AG04449 (cell line): ENCODE measurements at regions of chr1 and their contacts with region 1.

Region 1: DNA sequence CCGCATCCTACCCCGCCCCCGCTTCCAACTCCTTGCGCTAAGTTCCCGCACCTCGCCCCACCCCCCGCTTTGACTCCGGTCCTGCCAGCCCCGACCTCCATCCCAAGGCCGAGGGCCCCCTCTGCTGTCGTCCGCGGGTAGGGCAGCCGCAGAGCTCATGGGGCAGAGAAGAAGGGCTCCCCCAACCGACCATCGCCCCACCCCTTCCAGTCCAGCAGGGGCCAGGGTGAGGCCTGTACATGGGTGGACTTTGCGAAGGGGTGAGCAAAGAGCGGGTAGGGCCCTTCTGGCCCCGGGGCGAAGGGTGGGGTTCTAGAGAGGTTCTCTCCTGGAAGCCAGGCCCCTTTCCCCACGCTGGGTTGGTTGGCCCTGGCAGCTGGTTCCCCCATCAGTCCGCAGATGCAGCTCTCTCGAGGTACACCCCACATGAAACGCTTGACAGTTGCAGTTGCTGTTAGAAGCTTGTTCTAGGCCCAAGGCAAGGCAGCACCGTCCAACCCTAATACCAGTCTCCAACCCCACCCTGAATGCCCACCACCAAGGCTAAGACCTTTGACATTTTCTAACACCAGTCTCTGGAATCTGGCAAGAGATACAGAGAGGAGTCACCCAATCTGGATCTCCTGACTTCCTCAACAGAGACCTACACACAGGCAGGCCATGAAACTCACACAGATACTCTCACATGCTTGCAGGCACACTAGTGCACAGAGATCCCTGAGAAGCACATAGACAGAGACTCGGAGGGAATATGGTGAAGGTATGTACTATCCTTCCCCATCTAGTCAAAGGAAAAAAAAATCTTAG is 25.3 kb upstream of the ADGRB2 start:
- DNase-seq: peak; percentile 49
- H3K4me3 ChIP-seq: peak overlapping the region; percentile 76
- CTCF ChIP-seq: peak; percentile 99

Region 2: DNA sequence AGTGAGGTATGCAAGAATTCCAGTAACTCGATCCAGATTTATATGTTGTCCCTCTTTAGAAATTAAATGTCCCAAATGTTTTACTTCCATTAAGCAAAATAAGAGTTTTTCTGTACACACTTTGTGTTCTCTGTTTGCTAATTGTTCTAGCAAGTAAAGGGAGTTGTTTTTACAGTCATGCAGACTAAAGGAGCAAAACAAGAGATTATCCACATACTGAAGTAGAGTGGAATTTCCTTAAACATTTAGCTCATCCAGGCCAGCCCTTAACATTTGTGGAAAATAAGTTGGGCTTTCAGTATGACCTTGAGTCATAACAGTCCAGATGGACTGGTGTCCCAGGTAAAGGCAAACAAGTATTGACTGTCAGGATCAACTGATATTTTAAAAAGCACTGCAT is 257.3 kb before region 1 on chr1:
- CTCF ChIA-PET with region 1: no interaction called
- POLR2A ChIA-PET with region 1: no interaction called
- DNase-seq: no peak
- H3K4me3 ChIP-seq: no peak overlapping the region
- CTCF ChIP-seq: no peak

Region 3: GRCh38 chr1:31564134-31564989 is 225.1 kb before region 1 on chr1:
- CTCF ChIA-PET with region 1: interaction called, 40 read pairs
- POLR2A ChIA-PET with region 1: no interaction called
- DNase-seq: no peak
- H3K4me3 ChIP-seq: no peak overlapping the region
- CTCF ChIP-seq: peak; percentile 80

Region 4: DNA sequence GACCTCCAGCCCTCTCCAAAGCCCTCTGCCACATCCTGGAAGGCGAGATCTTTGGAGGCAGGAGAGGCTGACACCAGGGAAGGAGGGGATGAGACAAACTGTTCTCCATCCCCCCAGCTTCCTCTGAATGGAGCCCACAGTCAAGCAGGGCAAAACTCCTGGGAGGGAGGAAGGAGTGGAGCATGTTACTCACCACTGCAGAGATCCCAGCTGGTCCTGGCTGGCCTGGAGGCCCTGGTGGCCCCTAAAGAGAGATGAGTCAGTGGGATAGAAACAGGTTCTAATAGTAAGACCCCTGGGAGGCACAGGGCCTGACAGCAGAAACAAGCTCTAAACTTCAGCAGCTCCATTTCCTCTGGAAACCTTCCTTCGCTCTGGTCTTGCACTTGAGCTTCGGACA is 130.7 kb before region 1 on chr1:
- CTCF ChIA-PET with region 1: interaction called, 46 read pairs
- POLR2A ChIA-PET with region 1: interaction called, 6 read pairs
- DNase-seq: no peak
- H3K4me3 ChIP-seq: no peak overlapping the region
- CTCF ChIP-seq: no peak

Region 5: DNA sequence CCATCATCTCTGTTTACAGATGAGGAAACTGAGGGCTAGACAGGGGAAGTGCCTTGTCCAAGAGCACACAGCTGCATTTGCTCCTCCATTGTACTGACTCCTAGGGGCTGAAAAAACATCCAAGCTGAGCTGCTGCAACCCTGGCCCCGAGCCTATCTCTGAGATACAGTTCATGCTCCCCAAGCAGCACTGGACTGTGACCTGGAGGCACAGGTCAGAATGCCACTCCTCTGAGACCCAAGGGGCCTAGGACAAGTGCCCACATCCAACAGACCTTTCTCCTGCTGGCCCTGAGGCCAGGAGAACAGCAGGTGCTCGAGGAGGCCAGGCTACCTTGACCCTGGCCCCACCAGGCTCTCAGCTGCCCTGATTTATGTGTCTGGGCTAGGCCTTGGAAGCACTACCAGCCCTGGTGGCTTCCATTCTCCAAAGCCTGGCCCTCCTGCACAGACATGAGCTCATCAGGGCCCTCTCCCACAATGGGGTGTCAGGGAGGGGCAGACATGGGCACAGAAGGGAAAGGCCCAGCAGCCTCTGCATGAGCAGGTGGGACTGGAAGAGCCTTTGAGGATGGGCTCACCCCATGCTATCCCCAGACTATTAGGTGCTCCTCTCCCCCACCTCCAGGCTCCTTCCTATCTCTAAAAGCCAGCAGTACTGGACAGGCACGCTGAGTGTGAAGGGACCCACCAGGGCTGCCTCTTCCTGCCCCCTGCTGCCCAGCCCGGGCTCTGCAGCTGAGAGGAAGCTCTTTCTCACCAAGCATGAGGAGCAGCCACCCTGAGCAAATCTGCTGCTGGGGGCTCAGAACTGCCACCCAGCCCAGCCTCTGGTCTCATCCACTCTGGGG is 44.1 kb before region 1 on chr1:
- CTCF ChIA-PET with region 1: interaction called, 14 read pairs
- POLR2A ChIA-PET with region 1: no interaction called
- DNase-seq: no peak
- H3K4me3 ChIP-seq: no peak overlapping the region
- CTCF ChIP-seq: peak; percentile 92

Region 6: DNA sequence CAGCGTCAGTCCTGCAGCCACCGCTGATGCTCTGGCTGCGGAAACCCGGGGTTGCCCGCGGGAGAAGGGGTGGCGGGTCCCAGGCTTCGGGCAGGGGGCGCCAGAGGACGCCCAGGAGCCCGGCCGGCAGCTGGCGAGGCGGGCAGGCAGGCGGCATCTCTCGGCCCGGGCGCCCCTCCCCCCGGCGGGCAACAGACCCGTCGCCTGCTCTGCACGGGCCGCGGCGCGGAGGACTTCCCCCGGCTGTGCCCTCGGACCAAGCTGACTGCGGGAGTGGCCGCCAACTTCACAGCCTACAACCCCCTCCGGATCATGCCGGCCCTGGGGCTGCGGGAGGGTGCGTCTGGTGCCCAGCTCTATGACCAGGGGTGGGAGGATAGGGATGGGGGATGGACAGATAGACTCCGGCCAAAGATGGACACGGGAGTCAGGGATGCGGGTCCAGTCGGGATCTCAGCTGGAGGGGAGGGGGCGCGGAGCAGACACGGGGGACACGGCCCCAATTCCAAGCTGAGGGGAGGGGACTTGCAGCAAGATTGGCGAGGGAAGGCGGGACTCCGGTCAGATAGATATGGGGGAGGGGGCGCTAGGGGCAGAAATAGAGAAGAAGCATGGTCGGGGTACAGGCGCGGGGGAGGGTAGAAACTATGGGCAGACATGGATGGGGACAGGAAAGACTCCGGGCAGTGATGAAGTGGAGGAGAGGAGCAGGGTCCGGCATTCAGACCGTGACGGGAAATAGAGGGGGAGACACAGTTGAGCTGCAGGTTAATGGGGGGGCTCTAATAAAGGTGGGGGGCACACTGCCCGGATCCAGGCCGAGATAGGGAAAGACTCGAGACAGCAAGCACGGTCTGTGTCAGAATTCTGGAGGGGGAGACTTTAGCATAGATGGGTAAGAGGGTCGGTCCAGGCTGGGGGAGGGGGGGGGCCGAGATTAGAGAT is 26.5 kb before region 1 on chr1:
- CTCF ChIA-PET with region 1: interaction called, 21 read pairs
- POLR2A ChIA-PET with region 1: interaction called, 4 read pairs
- DNase-seq: no peak
- H3K4me3 ChIP-seq: peak overlapping the region; percentile 70
- CTCF ChIP-seq: peak; percentile 82

Region 7: GRCh38 chr1:31775210-31775999 is 14.1 kb before region 1 on chr1:
- CTCF ChIA-PET with region 1: interaction called, 28 read pairs
- POLR2A ChIA-PET with region 1: no interaction called
- DNase-seq: no peak
- H3K4me3 ChIP-seq: no peak overlapping the region
- CTCF ChIP-seq: no peak

Region 8: DNA sequence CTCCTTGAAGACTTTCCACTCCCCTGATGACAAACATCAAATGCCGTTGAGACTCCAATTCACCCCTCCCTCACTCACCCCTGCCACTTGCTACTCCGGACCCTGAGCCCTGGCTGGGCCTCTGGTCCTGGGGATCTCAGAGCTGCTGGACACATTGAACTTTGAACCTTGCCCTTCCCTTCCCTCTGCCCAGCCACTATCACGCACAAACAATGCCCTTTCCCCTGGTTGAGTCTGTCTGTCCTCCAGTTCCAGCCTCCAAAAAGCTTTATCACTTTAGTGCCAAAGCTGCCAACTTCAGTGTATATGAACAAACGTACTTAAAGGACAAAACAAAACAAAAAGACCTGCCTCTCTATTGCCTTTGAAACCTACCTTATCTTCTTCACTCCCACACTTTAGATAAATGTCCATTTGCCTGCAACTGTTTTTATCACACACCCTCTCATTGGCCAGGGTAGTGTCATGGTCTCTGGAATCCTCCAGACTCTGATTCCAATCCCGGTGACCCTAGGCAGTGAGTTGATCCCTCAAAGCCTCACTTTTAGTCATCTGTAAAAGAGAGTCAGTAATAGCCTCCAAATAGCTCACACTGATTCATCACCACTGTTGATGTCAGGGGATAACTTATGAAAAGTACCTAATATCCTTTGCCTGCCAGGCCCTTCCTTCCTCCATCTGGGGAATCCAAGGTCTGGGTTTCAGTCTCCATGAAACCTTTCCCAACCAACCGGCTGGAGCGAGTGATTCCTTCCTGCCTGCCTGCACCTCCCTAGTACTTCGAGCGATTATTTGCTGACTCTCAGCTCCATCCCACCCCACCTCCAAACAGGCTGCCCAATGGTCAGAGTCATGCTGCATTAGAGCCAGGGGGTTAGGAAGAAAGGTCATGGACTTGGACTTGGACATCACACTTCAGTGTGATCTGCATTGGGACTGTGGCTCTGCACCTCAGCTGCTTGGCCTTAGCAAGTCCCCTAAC is 42.2 kb after region 1 on chr1:
- CTCF ChIA-PET with region 1: no interaction called
- POLR2A ChIA-PET with region 1: no interaction called
- DNase-seq: no peak
- H3K4me3 ChIP-seq: no peak overlapping the region
- CTCF ChIP-seq: no peak

Region 9: GRCh38 chr1:31955917-31956736 is 166.7 kb after region 1 on chr1:
- CTCF ChIA-PET with region 1: interaction called, 73 read pairs
- POLR2A ChIA-PET with region 1: interaction called, 3 read pairs
- DNase-seq: peak; percentile 99
- H3K4me3 ChIP-seq: no peak overlapping the region
- CTCF ChIP-seq: peak; percentile 72